Endothelial cell of umbilical vein (primary cell): ENCODE measurements at regions of chr1 and their contacts with region 1.

Region 1: GRCh38 chr1:113928941-113929749 is at the start of gene HIPK1:
- DNase-seq: peak; percentile 90
- H3K4me3 ChIP-seq: peak within 1 kb of the TSS; percentile 63 to 73 (median 65)
- H3K27ac ChIP-seq: peak within 1 kb of the TSS; percentile 89
- H3K4me1 ChIP-seq: peaks cover 26% of the 10 kb centered on the region
- H3K27me3 ChIP-seq: peaks cover 0 to under 1% of the 10 kb centered on the region in 2 experiments
- CTCF ChIP-seq: no peak
- POLR2A ChIP-seq: peak; percentile 91
- total RNA-seq, gene HIPK1: 50.2 and 56.1 TPM in 2 replicates

Region 2: GRCh38 chr1:113363935-113364334 is 565.2 kb before region 1 on chr1:
- CTCF ChIA-PET with region 1: no interaction called
- POLR2A ChIA-PET with region 1: no interaction called
- dilution Hi-C with region 1: no loop called
- intact Hi-C with region 1: no loop called
- DNase-seq: no peak
- H3K4me3 ChIP-seq: no peak overlapping the region
- H3K27ac ChIP-seq: no peak overlapping the region
- H3K4me1 ChIP-seq: no peaks in the 10 kb centered on the region
- H3K27me3 ChIP-seq: peaks cover 0 to 2% of the 10 kb centered on the region in 2 experiments
- CTCF ChIP-seq: no peak
- POLR2A ChIP-seq: no peak

Region 3: DNA sequence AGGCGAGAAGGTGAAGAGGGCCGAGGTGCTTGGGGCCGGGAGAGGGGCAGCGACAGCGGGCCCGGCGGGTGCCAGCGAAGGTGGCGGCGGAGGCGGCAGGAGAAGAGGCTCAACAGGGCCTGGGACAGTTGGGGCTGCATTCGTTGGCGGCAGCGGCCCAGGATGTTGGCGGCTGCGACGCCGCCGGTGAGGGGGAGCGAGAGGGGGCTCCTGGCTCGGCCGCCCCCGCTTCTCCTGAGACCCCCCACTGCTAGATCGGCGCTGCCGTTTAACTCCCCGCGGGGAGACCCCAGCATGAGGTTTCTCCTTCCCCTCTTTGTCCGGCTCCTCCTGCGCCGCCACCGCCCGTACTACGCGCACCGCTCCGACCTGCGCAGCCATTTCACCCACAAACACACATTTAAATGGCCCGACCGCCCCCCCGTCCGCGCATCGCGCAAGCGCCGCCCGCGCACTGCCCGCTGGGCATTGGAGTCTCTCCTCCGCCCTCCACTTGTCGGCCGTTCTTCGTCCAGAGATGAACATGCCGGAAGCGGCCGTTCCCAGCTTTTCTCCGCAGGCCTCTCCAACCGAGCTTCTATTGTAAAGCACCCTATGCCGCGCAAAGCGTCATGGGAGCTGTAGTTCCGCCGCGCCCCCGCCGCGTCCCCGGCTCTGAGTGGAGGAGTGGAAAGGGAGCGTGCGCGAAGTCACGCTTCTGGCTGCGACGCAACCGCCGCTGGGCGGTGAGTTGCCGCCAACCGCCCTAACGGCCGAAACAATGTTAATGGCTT is 117.1 kb before region 1 on chr1 and contains the start of gene RSBN1:
- CTCF ChIA-PET with region 1: interaction called, 6 read pairs
- POLR2A ChIA-PET with region 1: interaction called, 5 read pairs
- dilution Hi-C with region 1: no loop called
- intact Hi-C with region 1: loop called (anchors 1 kb)
- DNase-seq: peak; percentile 100
- H3K4me3 ChIP-seq: peak within 1 kb of the TSS; percentile 65 to 97 (median 74)
- H3K27ac ChIP-seq: peak within 1 kb of the TSS; percentile 81
- H3K4me1 ChIP-seq: peaks cover 26% of the 10 kb centered on the region
- H3K27me3 ChIP-seq: no peaks in the 10 kb centered on the region
- CTCF ChIP-seq: peak in 1 of 2 donors; percentile 8
- POLR2A ChIP-seq: peak; percentile 89
- total RNA-seq, gene RSBN1: 10.8 and 13.4 TPM in 2 replicates

Region 4: GRCh38 chr1:113859478-113860175 is 69.5 kb before region 1 on chr1:
- CTCF ChIA-PET with region 1: interaction called, 5 read pairs
- POLR2A ChIA-PET with region 1: no interaction called
- dilution Hi-C with region 1: no loop called
- intact Hi-C with region 1: loop called (anchors 1 kb)
- DNase-seq: no peak
- H3K4me3 ChIP-seq: no peak overlapping the region
- H3K27ac ChIP-seq: peak overlapping the region; percentile 74
- H3K4me1 ChIP-seq: peaks cover 14% of the 10 kb centered on the region
- H3K27me3 ChIP-seq: no peaks in the 10 kb centered on the region
- CTCF ChIP-seq: no peak
- POLR2A ChIP-seq: no peak

Region 5: DNA sequence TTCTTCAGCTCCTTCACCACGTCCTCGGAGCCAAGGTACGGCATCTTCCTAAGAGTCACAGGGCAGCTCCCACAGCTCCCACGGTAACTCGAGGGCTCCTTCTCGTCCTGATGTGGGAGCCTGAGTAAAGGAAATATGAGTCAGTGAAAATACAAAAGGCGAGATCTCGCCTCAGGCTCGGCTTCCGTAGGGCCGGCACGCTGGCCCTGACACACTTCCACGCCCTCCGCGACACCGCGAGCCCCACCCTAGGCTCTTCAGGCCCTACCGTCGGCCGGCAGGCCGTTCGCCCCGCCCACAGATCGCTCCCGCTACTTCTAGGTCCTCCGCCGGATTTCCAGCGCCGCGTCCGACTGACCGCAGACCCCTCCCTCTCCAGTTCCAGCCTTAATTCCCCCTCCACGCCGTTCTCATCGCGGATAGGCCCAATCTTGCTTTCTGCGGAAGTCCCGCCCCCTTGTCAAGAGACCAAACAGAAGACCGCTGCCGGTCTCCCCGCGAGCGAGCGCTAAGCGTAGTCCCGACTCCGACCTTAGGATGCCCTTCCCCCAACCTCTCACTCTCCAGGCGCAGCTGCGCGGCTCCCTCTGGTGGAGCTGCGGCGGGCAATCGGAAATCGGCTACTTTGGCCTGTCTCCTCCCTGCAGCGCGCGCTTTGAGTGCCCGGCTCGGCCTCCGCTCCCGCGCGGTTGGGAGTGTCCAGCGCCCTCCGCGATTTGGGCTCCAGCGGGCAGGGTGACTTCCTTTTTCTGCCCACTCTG is 24.3 kb before region 1 on chr1 and contains the starts of genes AP4B1 and DCLRE1B:
- CTCF ChIA-PET with region 1: interaction called, 54 read pairs
- POLR2A ChIA-PET with region 1: interaction called, 8 read pairs
- dilution Hi-C with region 1: no loop called
- intact Hi-C with region 1: loop called (anchors 1 kb)
- DNase-seq: peak; percentile 100
- H3K4me3 ChIP-seq: peak within 1 kb of the TSS; percentile 55 to 86 (median 60)
- H3K27ac ChIP-seq: peak within 1 kb of the TSS; percentile 72
- H3K4me1 ChIP-seq: peaks cover 12% of the 10 kb centered on the region
- H3K27me3 ChIP-seq: no peaks in the 10 kb centered on the region
- CTCF ChIP-seq: peak; percentile 60 to 73
- POLR2A ChIP-seq: peak; percentile 96
- total RNA-seq, gene AP4B1: 29.4 and 33.0 TPM in 2 replicates
- total RNA-seq, gene DCLRE1B: 10.7 and 10.8 TPM in 2 replicates

Region 6: DNA sequence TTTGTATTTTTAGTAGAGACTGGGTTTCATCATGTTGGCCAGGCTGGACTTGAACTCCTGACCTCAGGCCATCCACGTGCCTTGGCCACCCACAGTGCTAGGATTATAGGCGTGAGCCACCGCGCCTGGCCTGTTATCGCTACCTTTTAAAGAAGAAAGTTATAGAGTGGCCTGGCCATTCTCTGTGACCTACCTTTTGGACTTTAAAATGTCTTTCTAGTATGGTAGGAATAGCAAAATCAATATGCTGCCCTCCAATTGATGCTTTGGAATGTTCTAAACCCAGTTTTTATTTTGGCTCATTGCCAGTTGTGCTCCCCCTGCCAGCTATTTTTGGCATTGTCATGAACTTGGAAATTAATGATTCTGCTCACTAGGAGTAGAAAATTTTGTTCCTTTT is 19.9 kb after region 1 on chr1:
- CTCF ChIA-PET with region 1: interaction called, 44 read pairs
- POLR2A ChIA-PET with region 1: interaction called, 3 read pairs
- dilution Hi-C with region 1: no loop called
- intact Hi-C with region 1: loop called (anchors 1 kb)
- DNase-seq: peak; percentile 28
- H3K4me3 ChIP-seq: no peak overlapping the region
- H3K27ac ChIP-seq: no peak overlapping the region
- H3K4me1 ChIP-seq: peaks cover 25% of the 10 kb centered on the region
- H3K27me3 ChIP-seq: no peaks in the 10 kb centered on the region
- CTCF ChIP-seq: peak; percentile 10 to 26
- POLR2A ChIP-seq: no peak

Region 7: DNA sequence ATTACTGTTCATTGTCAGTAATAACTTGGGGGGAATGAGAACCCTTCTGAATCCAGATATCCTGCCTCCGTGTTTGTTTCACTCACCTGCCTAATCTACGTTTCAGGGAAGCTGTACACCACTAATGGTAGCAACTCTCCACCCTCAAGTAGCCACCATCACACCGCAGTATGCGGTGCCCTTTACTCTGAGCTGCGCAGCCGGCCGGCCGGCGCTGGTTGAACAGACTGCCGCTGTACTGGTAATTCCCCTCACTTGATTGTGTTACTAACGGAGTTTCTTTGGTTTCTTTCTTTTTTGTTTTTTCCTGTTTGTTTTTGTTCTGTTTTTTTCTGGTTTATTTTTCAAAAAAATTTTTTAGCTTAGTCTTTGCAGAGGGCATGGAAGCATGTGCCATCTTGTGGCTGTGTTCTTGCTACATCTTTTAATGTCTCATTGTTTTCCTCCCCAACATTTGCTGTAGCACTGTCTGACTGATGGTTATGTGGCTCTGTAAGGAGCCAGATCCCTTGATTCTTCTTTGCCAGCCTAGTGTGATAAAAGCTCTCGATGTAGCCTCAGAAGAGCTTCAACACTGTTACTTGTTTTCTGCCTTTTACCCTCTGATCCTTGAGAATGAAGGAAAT is 34.2 kb after region 1 on chr1:
- CTCF ChIA-PET with region 1: interaction called, 20 read pairs
- POLR2A ChIA-PET with region 1: no interaction called
- dilution Hi-C with region 1: no loop called
- intact Hi-C with region 1: no loop called
- DNase-seq: no peak
- H3K4me3 ChIP-seq: no peak overlapping the region
- H3K27ac ChIP-seq: no peak overlapping the region
- H3K4me1 ChIP-seq: no peaks in the 10 kb centered on the region
- H3K27me3 ChIP-seq: no peaks in the 10 kb centered on the region
- CTCF ChIP-seq: no peak
- POLR2A ChIP-seq: no peak

Region 8: DNA sequence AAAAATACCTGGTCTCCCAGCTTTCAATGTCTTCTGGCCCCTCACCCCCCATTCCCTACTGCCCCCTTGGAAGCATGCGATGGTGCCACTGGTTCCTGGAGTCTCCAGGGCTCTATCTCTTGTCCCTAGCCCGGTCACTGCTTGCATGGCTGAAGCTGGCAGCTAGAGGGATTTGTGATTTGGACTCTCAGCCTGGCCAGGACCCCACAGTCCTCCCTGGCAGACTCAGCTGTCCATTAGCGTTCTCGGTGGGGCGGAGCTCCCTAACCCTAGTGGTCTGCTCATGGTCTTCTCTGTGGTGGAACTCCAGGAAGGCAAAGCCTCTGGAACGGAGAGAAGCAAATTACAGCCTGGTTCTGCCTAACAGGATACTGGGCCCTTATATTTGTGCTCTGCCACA is 124.5 kb after region 1 on chr1:
- CTCF ChIA-PET with region 1: no interaction called
- POLR2A ChIA-PET with region 1: no interaction called
- dilution Hi-C with region 1: no loop called
- intact Hi-C with region 1: no loop called
- DNase-seq: no peak
- H3K4me3 ChIP-seq: no peak overlapping the region
- H3K27ac ChIP-seq: no peak overlapping the region
- H3K4me1 ChIP-seq: no peaks in the 10 kb centered on the region
- H3K27me3 ChIP-seq: peaks cover 0 to 4% of the 10 kb centered on the region in 2 experiments
- CTCF ChIP-seq: no peak
- POLR2A ChIP-seq: no peak

Region 9: DNA sequence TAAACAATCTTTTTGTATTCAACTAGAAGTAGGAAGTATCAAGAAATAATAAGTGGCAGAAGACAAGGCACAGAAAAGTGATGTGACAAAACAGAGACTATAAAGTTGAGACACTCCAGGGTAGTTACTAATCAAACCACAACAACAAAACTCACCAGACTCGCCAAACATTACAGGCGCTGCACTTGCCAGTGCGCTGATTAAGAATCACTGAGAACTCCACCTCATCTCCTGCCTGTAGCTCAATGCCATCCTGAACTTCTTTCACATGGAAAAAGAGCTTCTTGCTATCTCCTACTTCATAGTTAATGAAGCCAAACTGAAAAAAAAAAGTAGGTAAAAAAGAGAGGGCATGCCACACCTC is 790.3 kb after region 1 on chr1:
- CTCF ChIA-PET with region 1: no interaction called
- POLR2A ChIA-PET with region 1: no interaction called
- dilution Hi-C with region 1: no loop called
- intact Hi-C with region 1: no loop called
- DNase-seq: no peak
- H3K4me3 ChIP-seq: no peak overlapping the region
- H3K27ac ChIP-seq: no peak overlapping the region
- H3K4me1 ChIP-seq: peaks cover 20% of the 10 kb centered on the region
- H3K27me3 ChIP-seq: no peaks in the 10 kb centered on the region
- CTCF ChIP-seq: no peak
- POLR2A ChIP-seq: no peak